ENCODE measurements at regions of chr4 and their contacts with region 1.

Region 1: DNA sequence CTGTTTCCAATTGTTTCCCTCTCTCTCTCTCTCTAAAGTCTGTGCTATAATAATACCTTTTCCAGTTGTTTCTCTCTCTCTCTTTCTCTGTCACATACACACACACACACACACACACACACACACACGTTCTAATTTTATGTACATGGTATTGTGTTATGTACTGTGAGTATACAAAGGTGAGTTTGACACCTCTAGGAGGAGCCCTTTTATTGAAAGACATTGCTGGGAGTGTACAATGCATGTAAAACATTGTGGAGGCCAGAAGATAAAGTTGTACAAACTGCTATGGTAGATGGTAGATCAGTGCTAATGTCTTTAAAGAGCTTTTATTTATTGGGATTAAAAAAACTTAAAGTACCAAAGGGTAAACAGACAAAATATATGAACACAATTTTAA is 53.6 kb downstream of the BLTP1 start:
- DNase-seq: no peak
- H3K4me3 ChIP-seq: no peak overlapping the region
- H3K27ac ChIP-seq: no peak overlapping the region
- H3K4me1 ChIP-seq: no peaks in the 10 kb centered on the region
- H3K27me3 ChIP-seq: no peaks in the 10 kb centered on the region
- CTCF ChIP-seq: no peak
- EP300 ChIP-seq: no peak
- POLR2A ChIP-seq: no peak

Region 2: DNA sequence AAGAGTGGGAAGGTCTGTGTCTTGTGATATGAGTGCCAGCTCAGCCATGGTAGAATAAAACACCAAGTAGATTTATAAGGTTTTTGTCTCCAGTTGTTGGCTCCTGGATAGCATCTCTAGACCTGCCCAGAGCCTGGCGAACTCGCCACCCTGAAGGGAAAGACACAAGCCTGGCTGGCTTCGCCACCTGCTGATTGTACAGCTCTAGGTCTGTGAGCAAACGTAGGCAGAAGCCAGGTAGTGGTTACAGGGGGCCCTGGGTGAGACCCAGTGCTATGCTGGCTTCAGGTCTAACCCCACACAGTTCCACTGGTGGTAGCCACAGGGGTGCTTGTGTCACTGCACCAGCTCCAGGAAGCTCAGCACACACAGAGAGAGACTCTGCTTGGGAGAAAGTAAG is 46.9 kb after region 1 on chr4:
- intact Hi-C with region 1: loop called (anchors 10 kb)
- DNase-seq: no peak
- H3K4me3 ChIP-seq: no peak overlapping the region
- H3K27ac ChIP-seq: no peak overlapping the region
- H3K4me1 ChIP-seq: no peaks in the 10 kb centered on the region
- H3K27me3 ChIP-seq: no peaks in the 10 kb centered on the region
- CTCF ChIP-seq: no peak
- EP300 ChIP-seq: no peak
- POLR2A ChIP-seq: no peak

Measured in esophagus muscularis mucosa (tissue), 4 donors.